Mammary epithelial cell (primary cell): ENCODE measurements at regions of chr7 and their contacts with region 1.

Region 1: DNA sequence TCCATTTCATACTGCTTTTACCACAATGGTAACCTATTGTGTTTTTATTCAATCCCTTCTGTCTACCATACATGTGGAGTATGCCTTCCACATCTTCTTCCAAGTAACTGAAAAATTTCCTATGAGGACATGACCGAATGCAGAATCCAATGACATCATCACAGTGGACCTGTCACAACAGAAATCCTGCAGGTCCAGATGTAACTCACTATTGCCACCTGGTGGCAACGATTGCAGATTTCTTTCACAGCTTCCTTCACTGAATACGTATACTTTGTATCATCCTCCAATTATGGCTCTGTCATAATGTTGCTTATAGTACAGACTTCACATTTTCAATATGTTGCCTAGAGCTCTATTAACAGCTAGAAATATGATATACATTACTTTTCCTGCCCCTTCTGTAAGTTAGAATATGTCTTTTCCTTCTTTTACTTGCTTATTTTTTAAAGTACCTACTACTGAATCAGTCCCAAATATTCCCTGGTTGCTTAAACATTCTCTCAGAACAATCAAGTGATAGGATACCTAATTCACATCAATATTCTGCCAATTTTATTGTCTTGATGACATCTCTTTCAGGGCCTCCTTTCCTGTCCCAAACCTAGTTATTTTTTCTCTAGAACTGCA is 45.4 kb downstream of the SLC13A1 start:
- DNase-seq: peak; percentile 73
- H3K4me3 ChIP-seq: no peak overlapping the region
- H3K27ac ChIP-seq: no peak overlapping the region
- H3K4me1 ChIP-seq: no peaks in the 10 kb centered on the region
- H3K27me3 ChIP-seq: no peaks in the 10 kb centered on the region
- CTCF ChIP-seq: peak; percentile 81 to 84

Region 2: DNA sequence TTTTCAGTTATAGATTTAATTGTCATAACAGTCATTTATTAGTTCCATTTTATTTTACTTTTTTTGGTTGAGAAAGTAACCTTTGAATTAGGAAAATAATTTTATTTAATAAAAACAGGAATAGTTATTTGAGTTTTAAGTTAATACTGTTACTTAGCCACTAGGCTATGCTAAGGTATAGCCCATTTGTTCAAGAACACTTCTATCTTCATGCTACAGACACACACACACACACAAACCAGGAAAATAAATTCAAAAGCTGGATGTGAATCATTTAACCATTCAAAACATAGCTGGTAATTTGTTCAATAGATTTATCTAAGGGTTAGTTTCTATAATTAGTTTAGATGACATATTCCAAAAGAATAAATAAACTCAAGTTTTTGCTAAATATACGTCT is 603.8 kb before region 1 on chr7:
- CTCF ChIA-PET with region 1: no interaction called
- dilution Hi-C with region 1: no loop called
- in situ Hi-C with region 1: no loop called
- intact Hi-C with region 1: loop called (anchors 10 kb)
- DNase-seq: no peak
- H3K4me3 ChIP-seq: no peak overlapping the region
- H3K27ac ChIP-seq: no peak overlapping the region
- H3K4me1 ChIP-seq: no peaks in the 10 kb centered on the region
- H3K27me3 ChIP-seq: no peaks in the 10 kb centered on the region
- CTCF ChIP-seq: peak in 1 of 2 donors; percentile 24

Region 3: GRCh38 chr7:122803323-122803722 is 351.0 kb before region 1 on chr7:
- CTCF ChIA-PET with region 1: no interaction called
- dilution Hi-C with region 1: no loop called
- in situ Hi-C with region 1: no loop called
- intact Hi-C with region 1: loop called (anchors 2 kb)
- DNase-seq: peak; percentile 20
- H3K4me3 ChIP-seq: no peak overlapping the region
- H3K27ac ChIP-seq: no peak overlapping the region
- H3K4me1 ChIP-seq: no peaks in the 10 kb centered on the region
- H3K27me3 ChIP-seq: no peaks in the 10 kb centered on the region
- CTCF ChIP-seq: peak; percentile 32 to 50

Region 4: DNA sequence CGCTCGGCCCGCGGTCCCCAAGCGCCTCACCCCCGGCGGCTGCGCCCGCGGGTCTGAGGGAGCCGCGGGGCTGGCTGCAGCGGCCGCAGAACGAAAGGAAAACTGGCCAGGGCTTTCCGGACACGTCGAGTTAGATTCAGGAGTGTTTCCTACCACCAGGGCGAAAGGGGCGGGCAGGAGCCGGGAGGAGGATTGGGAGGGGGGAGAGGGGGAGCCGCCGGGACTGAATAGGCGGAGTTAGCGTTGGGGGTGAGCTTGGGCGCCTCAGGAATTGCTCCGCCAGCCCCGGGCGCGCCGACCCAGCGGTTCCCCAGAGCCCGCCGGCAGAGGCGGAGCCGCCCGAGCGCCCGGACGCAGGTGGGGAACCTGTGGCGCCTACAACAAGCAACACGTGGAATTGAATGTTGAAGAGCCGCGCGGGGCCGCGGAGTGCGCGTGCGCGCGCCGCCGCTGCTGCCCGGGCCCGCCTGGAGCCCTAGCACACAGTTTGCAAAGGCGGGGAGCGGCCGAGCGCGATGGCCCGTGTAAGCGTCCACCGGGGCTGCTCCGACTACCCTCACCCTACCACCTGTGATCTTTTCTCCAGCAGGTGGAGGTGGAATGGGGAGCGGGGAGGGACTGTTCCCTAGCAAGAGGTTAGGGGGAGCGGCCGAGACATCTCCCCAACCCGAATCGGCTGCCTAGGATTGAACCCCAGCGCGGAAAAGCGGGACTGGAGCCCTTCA is 267.8 kb before region 1 on chr7 and contains the start of gene CADPS2:
- CTCF ChIA-PET with region 1: no interaction called
- dilution Hi-C with region 1: no loop called
- in situ Hi-C with region 1: no loop called
- intact Hi-C with region 1: loop called (anchors 5 kb)
- DNase-seq: peak; percentile 87
- H3K4me3 ChIP-seq: peak within 1 kb of the TSS; percentile 71 to 78 (median 73)
- H3K27ac ChIP-seq: no peak within 1 kb of the TSS
- H3K4me1 ChIP-seq: peaks cover 19% of the 10 kb centered on the region
- H3K27me3 ChIP-seq: peaks cover 3% of the 10 kb centered on the region
- CTCF ChIP-seq: no peak
- total RNA-seq, gene CADPS2: 1.1 to 7.3 TPM

Region 5: GRCh38 chr7:122896509-122896908 is 257.8 kb before region 1 on chr7:
- CTCF ChIA-PET with region 1: no interaction called
- dilution Hi-C with region 1: no loop called
- in situ Hi-C with region 1: no loop called
- intact Hi-C with region 1: loop called (anchors 1 kb)
- DNase-seq: no peak
- H3K4me3 ChIP-seq: no peak overlapping the region
- H3K27ac ChIP-seq: no peak overlapping the region
- H3K4me1 ChIP-seq: no peaks in the 10 kb centered on the region
- H3K27me3 ChIP-seq: no peaks in the 10 kb centered on the region
- CTCF ChIP-seq: no peak

Region 6: DNA sequence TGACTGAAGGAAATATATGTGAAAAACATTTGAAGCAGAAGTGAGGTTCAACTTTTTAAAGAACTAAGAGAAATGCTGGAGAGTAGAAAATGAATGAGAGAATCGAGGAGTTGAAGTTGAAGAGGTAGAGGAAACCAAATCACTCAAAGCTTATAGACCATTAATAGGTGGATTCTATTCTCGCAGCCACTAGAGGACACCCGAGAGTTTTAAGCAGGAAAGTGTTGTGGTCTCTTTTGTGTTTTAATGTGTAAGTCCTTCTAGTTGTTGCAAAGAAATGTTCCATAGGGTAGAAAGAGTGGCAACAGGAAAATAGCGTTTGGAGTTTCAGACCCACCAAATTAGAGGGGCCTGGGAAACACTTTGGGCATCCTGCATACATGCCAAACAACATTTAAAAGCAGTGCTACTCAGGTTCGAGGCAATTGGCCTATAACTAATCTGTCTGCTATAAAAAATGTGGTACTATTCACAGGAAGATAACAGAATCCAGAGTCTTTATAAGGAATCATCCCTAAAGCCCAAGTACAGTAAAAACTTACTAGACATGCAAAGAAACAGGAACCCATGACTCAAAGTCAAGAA is 83.6 kb before region 1 on chr7:
- CTCF ChIA-PET with region 1: no interaction called
- dilution Hi-C with region 1: no loop called
- in situ Hi-C with region 1: no loop called
- intact Hi-C with region 1: loop called (anchors 10 kb)
- DNase-seq: no peak
- H3K4me3 ChIP-seq: no peak overlapping the region
- H3K27ac ChIP-seq: no peak overlapping the region
- H3K4me1 ChIP-seq: no peaks in the 10 kb centered on the region
- H3K27me3 ChIP-seq: no peaks in the 10 kb centered on the region
- CTCF ChIP-seq: peak; percentile 54 to 56

Region 7: GRCh38 chr7:123090456-123090855 is 63.9 kb before region 1 on chr7:
- CTCF ChIA-PET with region 1: no interaction called
- dilution Hi-C with region 1: no loop called
- in situ Hi-C with region 1: no loop called
- intact Hi-C with region 1: no loop called
- DNase-seq: no peak
- H3K4me3 ChIP-seq: no peak overlapping the region
- H3K27ac ChIP-seq: no peak overlapping the region
- H3K4me1 ChIP-seq: no peaks in the 10 kb centered on the region
- H3K27me3 ChIP-seq: no peaks in the 10 kb centered on the region
- CTCF ChIP-seq: no peak

Region 8: GRCh38 chr7:123242467-123243092 is 88.2 kb after region 1 on chr7:
- CTCF ChIA-PET with region 1: no interaction called
- dilution Hi-C with region 1: no loop called
- in situ Hi-C with region 1: no loop called
- intact Hi-C with region 1: no loop called
- DNase-seq: peak; percentile 5
- H3K4me3 ChIP-seq: no peak overlapping the region
- H3K27ac ChIP-seq: no peak overlapping the region
- H3K4me1 ChIP-seq: no peaks in the 10 kb centered on the region
- H3K27me3 ChIP-seq: no peaks in the 10 kb centered on the region
- CTCF ChIP-seq: no peak

Region 9: GRCh38 chr7:123367484-123368122 is 213.3 kb after region 1 on chr7:
- CTCF ChIA-PET with region 1: no interaction called
- dilution Hi-C with region 1: no loop called
- in situ Hi-C with region 1: no loop called
- intact Hi-C with region 1: loop called (anchors 1 kb)
- DNase-seq: peak; percentile 15
- H3K4me3 ChIP-seq: no peak overlapping the region
- H3K27ac ChIP-seq: no peak overlapping the region
- H3K4me1 ChIP-seq: no peaks in the 10 kb centered on the region
- H3K27me3 ChIP-seq: no peaks in the 10 kb centered on the region
- CTCF ChIP-seq: peak; percentile 73 to 88